Upper lobe of right lung (tissue), 1 donor: ENCODE measurements at regions of chr12 and their contacts with region 1.

Region 1: GRCh38 chr12:31406345-31406744 is 80.4 kb upstream of the SINHCAF start:
- DNase-seq: no peak
- ATAC-seq: no peak
- H3K4me3 ChIP-seq: no peak overlapping the region
- H3K27ac ChIP-seq: no peak overlapping the region
- H3K4me1 ChIP-seq: peaks cover 5% of the 10 kb centered on the region
- H3K27me3 ChIP-seq: no peaks in the 10 kb centered on the region
- CTCF ChIP-seq: no peak

Region 2: GRCh38 chr12:31035967-31036665 is 370.2 kb before region 1 on chr12:
- intact Hi-C with region 1: no loop called
- DNase-seq: no peak
- ATAC-seq: no peak
- H3K4me3 ChIP-seq: no peak overlapping the region
- H3K27ac ChIP-seq: no peak overlapping the region
- H3K4me1 ChIP-seq: no peaks in the 10 kb centered on the region
- H3K27me3 ChIP-seq: no peaks in the 10 kb centered on the region
- CTCF ChIP-seq: no peak

Region 3: DNA sequence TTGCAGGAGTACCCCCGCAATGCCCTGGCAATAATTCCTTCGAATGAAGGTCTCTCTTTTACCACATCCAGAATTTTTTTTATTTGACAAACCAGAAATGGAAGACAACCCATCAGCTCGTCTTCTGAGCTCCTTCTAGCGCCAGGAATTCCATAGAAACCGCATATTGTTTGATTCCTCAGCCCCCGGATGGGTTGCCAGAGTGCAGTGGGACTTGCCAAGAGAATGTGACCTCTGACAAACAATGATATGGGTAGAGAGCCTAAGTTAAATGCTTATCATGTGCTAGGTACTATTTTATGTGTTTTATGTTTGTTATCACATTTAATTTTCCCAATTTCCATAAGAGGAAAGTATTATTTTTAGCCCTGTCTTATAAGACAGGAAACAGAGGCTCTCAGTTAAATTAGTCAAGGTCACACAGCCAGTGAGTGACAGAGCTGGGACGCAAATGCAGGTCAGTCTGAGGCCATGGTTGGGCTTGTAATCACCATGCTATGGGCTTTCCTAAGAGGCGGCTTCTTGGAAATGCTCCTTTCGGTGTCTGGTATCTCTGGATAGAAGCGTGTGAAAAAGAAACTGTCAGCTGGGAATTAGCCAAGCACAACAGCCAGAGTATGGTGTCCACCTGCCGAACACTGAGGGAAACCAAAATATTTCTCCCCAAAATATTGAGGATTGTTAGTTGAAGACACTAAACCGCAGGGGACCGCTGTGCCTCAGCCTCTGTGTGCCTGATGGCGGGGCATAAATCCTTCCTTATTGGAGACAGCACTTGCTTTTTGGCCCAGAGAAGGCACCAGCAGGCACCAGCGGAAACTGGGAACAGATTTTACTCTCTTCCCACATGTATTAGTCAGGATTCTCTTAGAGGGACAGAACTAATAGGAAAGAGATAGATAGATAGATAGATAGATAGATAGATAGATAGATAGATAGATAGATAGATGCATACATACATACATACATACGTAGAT is 223.7 kb after region 1 on chr12:
- intact Hi-C with region 1: loop called (anchors 5 kb)
- DNase-seq: no peak
- ATAC-seq: no peak
- H3K4me3 ChIP-seq: no peak overlapping the region
- H3K27ac ChIP-seq: no peak overlapping the region
- H3K4me1 ChIP-seq: no peaks in the 10 kb centered on the region
- H3K27me3 ChIP-seq: no peaks in the 10 kb centered on the region
- CTCF ChIP-seq: no peak